ENCODE measurements at regions of chr17 and their contacts with region 1.

Region 1: DNA sequence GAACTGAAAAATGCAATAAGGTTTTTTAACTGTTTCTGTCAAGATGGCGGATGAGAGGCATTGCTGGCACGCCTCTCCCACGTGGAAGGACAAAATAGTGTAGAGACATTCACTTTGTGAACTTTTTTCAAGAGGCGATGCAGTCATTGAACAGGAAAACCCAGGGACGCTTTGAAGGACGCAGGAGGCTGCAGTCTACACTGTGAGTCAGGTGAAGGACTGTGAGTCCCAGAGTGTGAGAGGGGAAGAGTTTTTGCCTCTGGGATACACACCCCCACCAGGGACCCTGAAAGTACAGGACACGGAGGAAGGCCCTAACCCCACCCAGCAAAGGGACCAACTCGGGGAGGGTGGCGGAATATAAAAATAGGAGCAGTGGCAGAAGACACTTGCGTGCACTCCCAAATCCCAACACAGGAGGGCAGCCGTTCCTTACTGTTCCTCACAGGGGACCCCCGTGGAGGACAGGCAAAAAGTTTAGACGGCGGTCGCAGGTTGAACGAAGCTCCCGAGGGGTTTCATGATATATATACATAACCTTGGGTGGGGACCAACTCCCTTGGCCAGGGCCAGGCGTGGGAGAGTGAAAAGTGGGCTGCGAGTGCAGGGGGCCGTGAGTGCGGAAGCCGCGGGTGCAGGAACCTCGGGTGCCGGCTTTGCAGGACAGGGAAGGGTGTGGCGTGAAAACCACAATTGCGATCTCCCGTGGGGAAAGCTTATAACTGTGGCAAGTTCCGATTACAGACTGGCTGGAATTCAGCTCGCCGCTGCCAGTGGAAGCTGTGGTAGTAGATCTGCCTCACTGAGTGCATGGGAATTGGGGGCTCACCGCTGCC is 82.0 kb upstream of the ALOX12 start:
- DNase-seq: peak; percentile 78 to 92 (median 88)
- ATAC-seq: peak; percentile 77 to 87
- H3K4me3 ChIP-seq: peak overlapping the region; percentile 48
- H3K27ac ChIP-seq: no peak overlapping the region
- H3K4me1 ChIP-seq: peaks cover 3% of the 10 kb centered on the region
- H3K27me3 ChIP-seq: no peaks in the 10 kb centered on the region

Region 2: DNA sequence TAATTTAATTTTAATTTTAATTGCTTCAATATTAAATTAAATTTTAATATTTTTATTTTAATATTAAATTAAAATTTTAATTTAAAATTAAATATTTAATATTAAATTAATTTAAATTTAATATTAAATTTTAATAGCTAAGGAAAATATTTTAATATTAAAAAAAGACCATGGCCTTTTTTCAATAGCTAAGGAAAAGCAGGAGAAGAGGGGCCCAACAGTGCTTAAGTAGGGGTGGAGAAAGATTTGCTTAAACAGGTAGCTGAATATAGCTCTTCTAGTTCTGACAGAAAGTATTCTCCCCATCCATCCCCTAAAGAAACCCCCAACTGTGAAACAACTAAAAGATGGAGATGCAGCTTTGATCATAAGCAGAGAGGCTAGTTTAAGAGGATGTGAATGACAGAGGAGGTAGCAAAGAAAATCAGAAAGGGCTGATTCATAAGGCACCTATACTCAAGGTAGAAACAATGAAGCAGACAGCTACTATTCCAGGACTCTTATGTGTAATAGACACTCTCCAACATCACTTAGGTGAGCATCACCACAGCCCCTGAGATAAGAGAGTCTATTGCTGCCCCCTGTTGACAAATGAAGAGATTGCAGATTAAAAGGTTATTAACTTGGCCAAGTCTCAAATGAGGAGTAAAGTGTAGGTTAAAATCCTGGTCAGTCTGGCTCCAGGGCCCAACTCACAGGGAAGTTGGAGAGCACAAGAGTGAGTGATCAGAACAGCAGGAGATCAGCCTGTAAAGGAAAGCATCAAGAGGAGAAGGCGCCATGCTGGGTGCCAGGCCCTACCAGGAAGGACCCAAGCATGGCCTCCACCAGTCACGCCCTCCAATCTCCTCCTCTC is 90.8 kb after region 1 on chr17:
- intact Hi-C with region 1: loop called (anchors 5 kb)
- DNase-seq: peak in 1 of 3 donors; percentile 62
- ATAC-seq: peak; percentile 61 to 70
- H3K4me3 ChIP-seq: no peak overlapping the region
- H3K27ac ChIP-seq: no peak overlapping the region
- H3K4me1 ChIP-seq: no peaks in the 10 kb centered on the region
- H3K27me3 ChIP-seq: no peaks in the 10 kb centered on the region

Region 3: DNA sequence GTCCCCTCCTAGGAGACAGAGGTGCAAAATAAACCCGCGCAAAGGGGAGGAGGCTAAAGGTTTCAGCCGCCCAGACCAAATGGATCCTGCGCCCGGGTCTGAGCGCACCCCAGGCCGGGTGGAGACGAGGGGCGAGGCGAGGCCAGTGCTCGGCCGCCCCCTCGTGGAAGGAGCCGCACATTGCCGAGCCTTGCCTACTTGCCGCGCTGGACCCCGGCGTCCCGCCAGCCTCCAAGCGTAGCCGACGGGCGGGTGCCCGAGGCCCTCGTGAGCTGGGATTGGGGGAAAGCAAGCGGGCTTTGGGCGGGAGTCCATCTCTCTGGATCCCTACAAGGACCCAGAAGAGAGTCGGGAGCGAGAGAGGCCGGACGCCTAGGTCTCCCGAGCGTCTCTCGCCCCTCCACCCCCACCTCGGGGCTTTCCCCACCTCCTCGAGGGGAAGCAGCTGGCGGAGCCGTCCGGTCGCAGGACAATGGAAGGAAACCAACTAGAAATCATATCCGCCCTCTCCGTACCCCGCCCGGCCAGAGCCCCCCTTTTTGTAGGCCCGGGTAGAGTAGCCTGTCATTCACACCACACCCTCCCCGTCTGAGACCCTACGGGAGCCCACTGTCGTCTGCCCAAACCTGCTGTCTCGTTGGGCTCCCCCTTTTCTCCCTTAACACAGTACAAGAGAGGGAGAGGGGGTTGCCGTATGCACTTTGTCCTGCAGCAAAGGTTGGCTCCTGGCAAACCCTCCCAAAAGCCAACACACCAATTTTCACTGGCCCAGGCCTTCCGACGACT is 108.4 kb after region 1 on chr17:
- intact Hi-C with region 1: loop called in 1 of 4 experiments (anchors 5 kb)
- DNase-seq: peak; percentile 86 to 95 (median 94)
- ATAC-seq: peak; percentile 67 to 71
- H3K4me3 ChIP-seq: peak overlapping the region; percentile 21
- H3K27ac ChIP-seq: peak overlapping the region; percentile 85
- H3K4me1 ChIP-seq: peaks cover 5% of the 10 kb centered on the region
- H3K27me3 ChIP-seq: no peaks in the 10 kb centered on the region

Measured in right cardiac atrium (tissue), 5 donors.